Right ventricle myocardium inferior (tissue), 1 donor: ENCODE measurements at regions of chr13 and their contacts with region 1.

Region 1: GRCh38 chr13:71867131-71867814 is at the start of gene DACH1:
- DNase-seq: peak; percentile 74
- ATAC-seq: peak; percentile 80
- total RNA-seq, gene DACH1: 4.7 TPM

Region 2: DNA sequence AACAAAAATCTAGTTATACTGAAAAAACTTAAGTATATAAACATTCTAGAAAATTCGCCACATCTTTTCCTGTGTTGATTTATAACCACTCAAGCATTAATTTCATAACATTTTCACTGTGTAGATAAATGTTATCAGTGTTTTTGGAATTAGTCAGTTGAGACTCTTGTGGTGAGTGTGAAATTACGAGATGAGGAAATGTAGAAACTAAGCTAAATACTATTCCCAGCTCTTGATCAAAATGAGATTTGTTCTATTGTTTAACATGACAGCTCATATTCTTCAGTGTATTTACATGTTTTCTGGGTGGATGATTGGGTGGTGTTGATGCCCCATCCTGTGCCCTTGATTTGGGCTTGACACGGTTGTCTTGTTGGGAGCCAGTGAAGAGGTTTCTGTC is 407.1 kb before region 1 on chr13:
- intact Hi-C with region 1: loop called (anchors 10 kb)
- DNase-seq: no peak
- ATAC-seq: no peak

Region 3: DNA sequence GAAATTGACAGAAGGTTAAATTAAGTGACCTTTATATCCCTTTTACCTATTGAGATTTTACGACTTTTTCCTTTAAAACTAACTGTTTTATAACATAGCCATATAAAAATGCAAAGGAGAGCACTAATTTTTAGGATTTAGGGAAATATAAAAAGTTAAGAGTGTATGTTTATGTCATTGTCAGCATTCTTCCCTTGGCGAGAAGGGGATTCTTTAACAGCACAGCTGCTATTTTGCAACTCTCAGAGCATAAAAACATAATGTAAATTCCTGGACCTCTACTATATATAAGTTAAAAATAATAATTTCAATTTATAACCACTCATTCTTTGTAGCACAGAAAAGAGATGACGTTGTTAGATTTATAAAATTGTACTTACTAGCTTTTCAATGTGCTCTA is 363.5 kb before region 1 on chr13:
- intact Hi-C with region 1: loop called (anchors 10 kb)
- DNase-seq: no peak
- ATAC-seq: no peak

Region 4: GRCh38 chr13:71621174-71622124 is 245.8 kb before region 1 on chr13:
- intact Hi-C with region 1: loop called (anchors 2 kb)
- DNase-seq: no peak
- ATAC-seq: no peak

Region 5: DNA sequence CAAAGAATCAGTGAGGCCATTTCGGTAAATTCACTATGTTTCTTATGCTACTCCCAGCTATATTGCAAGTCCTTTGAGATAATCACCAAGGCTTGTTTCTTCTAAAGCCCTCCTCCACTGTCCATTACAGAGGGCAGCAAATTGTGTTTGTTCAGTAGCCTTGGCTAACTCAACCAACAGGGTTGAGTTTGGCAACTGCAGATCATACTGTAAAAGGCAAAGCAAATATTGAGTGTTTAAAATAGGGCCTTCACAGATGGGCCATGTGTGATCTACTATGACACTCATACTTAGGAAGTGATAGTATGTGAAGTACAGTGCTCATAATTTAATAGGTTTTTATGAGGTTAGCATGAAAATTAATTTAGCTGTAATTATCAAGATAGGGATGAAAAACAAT is 171.6 kb before region 1 on chr13:
- intact Hi-C with region 1: no loop called
- DNase-seq: no peak
- ATAC-seq: no peak

Region 6: DNA sequence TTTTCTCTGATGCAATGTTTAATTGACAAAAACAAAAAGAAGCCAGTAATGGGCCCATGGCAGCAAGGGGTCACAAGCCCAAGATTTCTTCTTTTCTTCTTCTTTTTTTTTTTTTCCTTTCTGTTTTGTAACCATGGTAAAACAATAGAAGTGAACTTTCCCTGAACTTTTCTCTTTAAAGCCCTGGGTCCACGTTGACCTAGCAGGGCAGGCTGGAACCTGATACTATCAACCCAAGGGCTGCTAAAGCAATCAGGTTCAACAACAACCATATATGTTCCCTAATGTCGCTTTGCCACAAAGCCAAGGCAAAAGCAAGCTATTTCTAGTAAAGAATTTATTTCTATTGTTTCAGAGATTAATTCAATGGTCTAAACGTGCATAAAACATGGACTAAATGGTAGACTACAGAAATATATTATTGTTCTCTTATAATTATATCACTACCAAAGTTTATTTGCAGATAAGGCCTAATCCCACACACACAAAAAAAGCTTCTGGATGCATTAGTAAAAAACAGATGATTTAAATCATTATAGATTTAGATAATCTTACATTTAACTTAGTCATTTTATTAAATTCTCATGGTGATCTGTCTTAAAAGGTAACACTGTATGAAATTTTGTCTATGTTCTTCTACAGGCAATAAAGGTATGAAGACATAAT is 154.2 kb before region 1 on chr13:
- intact Hi-C with region 1: loop called (anchors 10 kb)
- DNase-seq: no peak
- ATAC-seq: no peak